CD8-positive, alpha-beta memory T cell (primary cell): ENCODE measurements at regions of chr2 and their contacts with region 1.

Region 1: GRCh38 chr2:85888684-85889626 is at the start of gene ST3GAL5:
- DNase-seq: peak; percentile 89 to 96 (median 93)
- H3K4me3 ChIP-seq: peak within 1 kb of the TSS; percentile 97
- H3K4me3 Mint-ChIP-seq: peak within 1 kb of the TSS; percentile 94 to 99 (median 97)
- H3K27ac ChIP-seq: peak within 1 kb of the TSS; percentile 79
- H3K27ac Mint-ChIP-seq: peak within 1 kb of the TSS; percentile 95 to 99 (median 97)
- H3K4me1 ChIP-seq: peaks cover 44% of the 10 kb centered on the region
- H3K4me1 Mint-ChIP-seq: peaks cover 66 to 78% (median 76%) of the 10 kb centered on the region in 3 donors
- H3K27me3 ChIP-seq: no peaks in the 10 kb centered on the region
- H3K27me3 Mint-ChIP-seq: no peaks in the 10 kb centered on the region
- total RNA-seq, gene ST3GAL5: 11.1 to 11.2 TPM

Region 2: DNA sequence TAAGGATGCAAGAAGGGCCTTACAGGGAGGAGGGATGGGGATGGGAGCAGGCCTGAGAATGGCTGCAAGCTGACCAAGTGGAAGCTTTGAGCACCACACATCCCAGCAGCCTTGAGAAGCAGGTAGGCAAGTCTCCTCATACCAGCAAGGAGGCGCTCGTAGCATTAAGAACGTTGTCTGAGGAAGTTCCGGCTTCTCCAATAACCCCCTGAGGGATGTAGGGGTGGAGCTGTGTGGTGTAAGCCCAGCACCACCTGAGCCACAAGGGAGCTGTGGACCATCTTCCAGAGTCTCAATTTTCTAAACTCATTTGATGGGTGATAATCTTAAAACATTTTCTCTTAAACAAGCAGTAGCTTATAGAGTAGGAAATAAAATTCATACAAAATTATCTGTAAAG is 50.8 kb before region 1 on chr2:
- CTCF ChIA-PET with region 1: interaction called, 71 read pairs
- POLR2A ChIA-PET with region 1: no interaction called
- DNase-seq: no peak
- H3K4me3 ChIP-seq: no peak overlapping the region
- H3K4me3 Mint-ChIP-seq: no peak overlapping the region
- H3K27ac ChIP-seq: no peak overlapping the region
- H3K27ac Mint-ChIP-seq: peak overlapping the region; percentile 6 to 92 (median 78)
- H3K4me1 ChIP-seq: peaks cover 4% of the 10 kb centered on the region
- H3K4me1 Mint-ChIP-seq: peaks cover 20 to 36% (median 35%) of the 10 kb centered on the region in 3 donors
- H3K27me3 ChIP-seq: no peaks in the 10 kb centered on the region
- H3K27me3 Mint-ChIP-seq: peaks cover 0 to 3% of the 10 kb centered on the region in 2 donors

Region 3: GRCh38 chr2:85852937-85853498 is 35.9 kb before region 1 on chr2:
- CTCF ChIA-PET with region 1: interaction called, 97 read pairs
- POLR2A ChIA-PET with region 1: interaction called, 30 read pairs
- DNase-seq: peak; percentile 70 to 92 (median 79)
- H3K4me3 ChIP-seq: peak overlapping the region; percentile 60
- H3K4me3 Mint-ChIP-seq: peak overlapping the region; percentile 83 to 90 (median 88)
- H3K27ac ChIP-seq: peak overlapping the region; percentile 82
- H3K27ac Mint-ChIP-seq: peak overlapping the region; percentile 98 to 100 (median 100)
- H3K4me1 ChIP-seq: peaks cover 58% of the 10 kb centered on the region
- H3K4me1 Mint-ChIP-seq: peaks cover 62 to 87% (median 86%) of the 10 kb centered on the region in 3 donors
- H3K27me3 ChIP-seq: no peaks in the 10 kb centered on the region
- H3K27me3 Mint-ChIP-seq: no peaks in the 10 kb centered on the region

Region 4: DNA sequence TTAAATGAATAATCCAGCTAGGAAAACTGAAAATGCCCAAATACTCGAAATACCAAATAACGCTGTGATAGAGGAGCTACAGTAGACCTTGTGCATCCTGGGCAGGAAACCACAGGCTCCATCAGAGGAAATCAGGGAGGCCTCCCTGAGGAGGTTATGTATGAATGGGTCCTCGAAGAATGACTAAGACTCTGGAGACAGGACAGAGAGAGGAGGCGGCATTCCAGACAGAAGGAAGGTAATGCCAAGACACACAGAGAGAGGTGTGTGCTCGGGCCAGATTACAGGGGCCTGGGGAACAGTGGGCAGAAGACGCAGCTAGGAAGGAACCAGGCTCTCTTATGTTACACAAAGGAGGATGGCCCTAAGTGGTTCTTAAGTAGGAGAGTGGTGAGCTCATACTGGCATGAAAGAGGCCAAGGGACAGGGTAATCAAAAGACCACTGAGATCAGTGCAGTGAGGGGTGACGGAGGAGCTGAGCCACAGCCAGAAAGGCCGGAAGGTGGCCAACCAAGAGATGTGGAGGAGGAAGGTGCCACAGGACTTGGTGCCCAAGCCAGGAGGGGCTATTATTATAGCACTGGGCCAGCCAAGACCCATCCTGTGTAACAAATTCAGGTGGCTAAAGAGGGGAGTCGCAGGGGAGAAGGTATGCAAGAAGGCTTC is 10.1 kb before region 1 on chr2:
- CTCF ChIA-PET with region 1: interaction called, 29 read pairs
- POLR2A ChIA-PET with region 1: interaction called, 3 read pairs
- DNase-seq: no peak
- H3K4me3 ChIP-seq: no peak overlapping the region
- H3K4me3 Mint-ChIP-seq: peak overlapping the region in 4 of 7 donors; percentile 40 to 81 (median 47)
- H3K27ac ChIP-seq: no peak overlapping the region
- H3K27ac Mint-ChIP-seq: peak overlapping the region; percentile 34 to 95 (median 76)
- H3K4me1 ChIP-seq: peaks cover 36% of the 10 kb centered on the region
- H3K4me1 Mint-ChIP-seq: peaks cover 65 to 82% (median 79%) of the 10 kb centered on the region in 3 donors
- H3K27me3 ChIP-seq: no peaks in the 10 kb centered on the region
- H3K27me3 Mint-ChIP-seq: no peaks in the 10 kb centered on the region

Region 5: GRCh38 chr2:85913884-85914881 is 25.2 kb after region 1 on chr2:
- CTCF ChIA-PET with region 1: no interaction called
- POLR2A ChIA-PET with region 1: no interaction called
- DNase-seq: no peak
- H3K4me3 ChIP-seq: no peak overlapping the region
- H3K4me3 Mint-ChIP-seq: no peak overlapping the region
- H3K27ac ChIP-seq: no peak overlapping the region
- H3K27ac Mint-ChIP-seq: peak overlapping the region in 1 of 8 donors; percentile 93
- H3K4me1 ChIP-seq: no peaks in the 10 kb centered on the region
- H3K4me1 Mint-ChIP-seq: no peaks in the 10 kb centered on the region
- H3K27me3 ChIP-seq: no peaks in the 10 kb centered on the region
- H3K27me3 Mint-ChIP-seq: no peaks in the 10 kb centered on the region

Region 6: GRCh38 chr2:85994421-85994777 is 105.4 kb after region 1 on chr2:
- CTCF ChIA-PET with region 1: interaction called, 13 read pairs
- POLR2A ChIA-PET with region 1: no interaction called
- DNase-seq: no peak
- H3K4me3 ChIP-seq: no peak overlapping the region
- H3K4me3 Mint-ChIP-seq: peak overlapping the region in 6 of 7 donors; percentile 49 to 76 (median 68)
- H3K27ac ChIP-seq: peak overlapping the region; percentile 52
- H3K27ac Mint-ChIP-seq: peak overlapping the region; percentile 29 to 88 (median 76)
- H3K4me1 ChIP-seq: peaks cover 51% of the 10 kb centered on the region
- H3K4me1 Mint-ChIP-seq: peaks cover 44 to 57% (median 46%) of the 10 kb centered on the region in 3 donors
- H3K27me3 ChIP-seq: no peaks in the 10 kb centered on the region
- H3K27me3 Mint-ChIP-seq: no peaks in the 10 kb centered on the region

Region 7: GRCh38 chr2:86079981-86080911 is 191.3 kb after region 1 on chr2:
- CTCF ChIA-PET with region 1: interaction called, 96 read pairs
- POLR2A ChIA-PET with region 1: interaction called, 15 read pairs
- DNase-seq: peak; percentile 71 to 89 (median 79)
- H3K4me3 ChIP-seq: no peak overlapping the region
- H3K4me3 Mint-ChIP-seq: peak overlapping the region; percentile 21 to 82 (median 69)
- H3K27ac ChIP-seq: peak overlapping the region; percentile 64
- H3K27ac Mint-ChIP-seq: peak overlapping the region; percentile 96 to 99 (median 97)
- H3K4me1 ChIP-seq: peaks cover 22% of the 10 kb centered on the region
- H3K4me1 Mint-ChIP-seq: peaks cover 29 to 35% (median 32%) of the 10 kb centered on the region in 3 donors
- H3K27me3 ChIP-seq: no peaks in the 10 kb centered on the region
- H3K27me3 Mint-ChIP-seq: peaks cover 0 to 6% of the 10 kb centered on the region in 2 donors